ENCODE measurements at regions of chr12 and their contacts with region 1.

Region 1: DNA sequence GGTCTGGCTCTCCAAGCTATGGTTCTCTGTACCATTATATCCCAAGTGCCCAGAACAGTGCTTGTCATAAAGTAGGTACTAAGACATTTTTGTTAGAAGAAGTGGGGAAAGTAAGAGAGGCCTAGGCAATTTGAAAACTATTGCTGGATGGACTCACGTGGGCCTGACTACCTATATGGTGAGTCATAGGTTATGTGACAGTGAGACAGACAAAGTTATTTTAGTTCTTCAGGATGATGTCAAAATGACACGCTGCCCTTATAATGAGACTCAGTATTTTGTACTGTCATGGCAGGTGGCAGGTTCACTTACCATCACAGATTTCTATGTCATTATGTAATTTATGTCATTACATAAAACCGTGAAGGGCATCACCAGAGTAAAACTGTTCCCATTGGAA is 53.1 kb downstream of the PARP11 start:
- DNase-seq: no peak
- H3K4me3 ChIP-seq: no peak overlapping the region
- H3K27ac ChIP-seq: no peak overlapping the region
- H3K4me1 ChIP-seq: no peaks in the 10 kb centered on the region
- H3K27me3 ChIP-seq: no peaks in the 10 kb centered on the region
- CTCF ChIP-seq: no peak

Region 2: GRCh38 chr12:3173912-3174311 is 646.2 kb before region 1 on chr12:
- CTCF ChIA-PET with region 1: no interaction called
- POLR2A ChIA-PET with region 1: interaction called, 14 read pairs
- intact Hi-C with region 1: no loop called
- DNase-seq: no peak
- H3K4me3 ChIP-seq: no peak overlapping the region
- H3K27ac ChIP-seq: no peak overlapping the region
- H3K4me1 ChIP-seq: peaks cover 8% of the 10 kb centered on the region
- H3K27me3 ChIP-seq: no peaks in the 10 kb centered on the region
- CTCF ChIP-seq: no peak

Region 3: GRCh38 chr12:4307593-4308333 is 487.6 kb after region 1 on chr12:
- CTCF ChIA-PET with region 1: no interaction called
- POLR2A ChIA-PET with region 1: no interaction called
- intact Hi-C with region 1: no loop called
- DNase-seq: peak; percentile 75
- H3K4me3 ChIP-seq: no peak overlapping the region
- H3K27ac ChIP-seq: no peak overlapping the region
- H3K4me1 ChIP-seq: no peaks in the 10 kb centered on the region
- H3K27me3 ChIP-seq: peaks cover 36% of the 10 kb centered on the region
- CTCF ChIP-seq: peak; percentile 63